Panc1 (cell line): ENCODE measurements at regions of chr1 and their contacts with region 1.

Region 1: GRCh38 chr1:205172729-205173366 is 38.7 kb downstream of the DSTYK start:
- DNase-seq: peak; percentile 64
- ATAC-seq: peak; percentile 47; the same call in 1 of the 2 replicates
- H3K4me3 ChIP-seq: no peak overlapping the region
- H3K27ac ChIP-seq: no peak overlapping the region
- H3K4me1 ChIP-seq: peaks cover 10% of the 10 kb centered on the region
- H3K27me3 ChIP-seq: no peaks in the 10 kb centered on the region
- CTCF ChIP-seq: no peak

Region 2: DNA sequence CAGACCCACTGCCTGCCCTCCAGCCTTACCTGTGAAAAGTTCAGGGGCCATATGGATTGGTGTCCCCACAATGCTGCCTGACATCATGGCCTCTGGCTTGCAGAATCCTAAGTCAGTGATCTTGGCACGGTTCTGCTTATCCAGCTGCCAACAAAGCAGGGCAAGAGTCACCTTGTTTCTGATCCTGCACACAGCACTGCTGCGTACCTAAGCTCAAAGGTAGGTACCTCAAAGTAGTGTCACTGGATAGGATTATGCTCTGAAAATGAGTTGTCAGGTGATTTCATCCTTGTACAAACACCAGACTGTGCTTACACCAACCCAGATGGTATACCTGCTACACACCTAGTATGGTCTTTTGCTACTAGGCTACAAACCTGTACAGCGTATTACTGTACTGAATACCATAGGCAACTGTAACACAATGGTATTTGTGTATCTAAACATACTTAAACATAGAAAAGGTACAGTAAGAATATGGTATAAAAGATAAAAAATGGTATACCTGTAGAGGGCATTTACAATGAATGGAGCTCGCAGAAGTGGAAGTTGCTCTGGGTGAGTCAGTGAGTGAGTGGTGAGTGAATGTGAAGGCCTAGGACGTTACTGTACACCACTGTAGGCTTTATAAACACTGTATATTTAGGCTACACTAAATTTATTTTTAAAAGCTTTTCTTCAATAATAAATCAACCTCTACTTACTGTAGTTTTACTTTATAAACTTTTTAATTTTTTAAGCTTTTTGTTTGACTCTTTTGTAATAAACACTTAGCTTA is 22.0 kb before region 1 on chr1:
- CTCF ChIA-PET with region 1: no interaction called
- POLR2A ChIA-PET with region 1: no interaction called
- in situ Hi-C with region 1: no loop called
- intact Hi-C with region 1: no loop called
- DNase-seq: no peak
- ATAC-seq: no peak
- H3K4me3 ChIP-seq: no peak overlapping the region
- H3K27ac ChIP-seq: no peak overlapping the region
- H3K4me1 ChIP-seq: no peaks in the 10 kb centered on the region
- H3K27me3 ChIP-seq: no peaks in the 10 kb centered on the region
- CTCF ChIP-seq: no peak

Region 3: GRCh38 chr1:205186191-205186590 is 13.3 kb after region 1 on chr1:
- CTCF ChIA-PET with region 1: interaction called, 4 read pairs
- POLR2A ChIA-PET with region 1: interaction called, 10 read pairs
- in situ Hi-C with region 1: no loop called
- intact Hi-C with region 1: no loop called
- DNase-seq: no peak
- ATAC-seq: no peak
- H3K4me3 ChIP-seq: no peak overlapping the region
- H3K27ac ChIP-seq: no peak overlapping the region
- H3K4me1 ChIP-seq: 0 out of 2 replicates have a peak, but pooled peaks cover 2% of the 10 kb centered on the region
- H3K27me3 ChIP-seq: no peaks in the 10 kb centered on the region
- CTCF ChIP-seq: no peak

Region 4: GRCh38 chr1:205227584-205228006 is 54.7 kb after region 1 on chr1 and contains the start of gene TMCC2:
- CTCF ChIA-PET with region 1: no interaction called
- POLR2A ChIA-PET with region 1: interaction called, 11 read pairs
- in situ Hi-C with region 1: no loop called
- intact Hi-C with region 1: no loop called
- DNase-seq: no peak
- ATAC-seq: peak; percentile 96
- H3K4me3 ChIP-seq: peak within 1 kb of the TSS; percentile 70 to 74
- H3K27ac ChIP-seq: peak within 1 kb of the TSS; percentile 65; the same call in 1 of the 2 replicates
- H3K4me1 ChIP-seq: peaks cover 9% of the 10 kb centered on the region
- H3K27me3 ChIP-seq: no peaks in the 10 kb centered on the region; the same call in 1 of the 2 replicates
- CTCF ChIP-seq: no peak
- total RNA-seq, gene TMCC2: 3.1 TPM

Region 5: DNA sequence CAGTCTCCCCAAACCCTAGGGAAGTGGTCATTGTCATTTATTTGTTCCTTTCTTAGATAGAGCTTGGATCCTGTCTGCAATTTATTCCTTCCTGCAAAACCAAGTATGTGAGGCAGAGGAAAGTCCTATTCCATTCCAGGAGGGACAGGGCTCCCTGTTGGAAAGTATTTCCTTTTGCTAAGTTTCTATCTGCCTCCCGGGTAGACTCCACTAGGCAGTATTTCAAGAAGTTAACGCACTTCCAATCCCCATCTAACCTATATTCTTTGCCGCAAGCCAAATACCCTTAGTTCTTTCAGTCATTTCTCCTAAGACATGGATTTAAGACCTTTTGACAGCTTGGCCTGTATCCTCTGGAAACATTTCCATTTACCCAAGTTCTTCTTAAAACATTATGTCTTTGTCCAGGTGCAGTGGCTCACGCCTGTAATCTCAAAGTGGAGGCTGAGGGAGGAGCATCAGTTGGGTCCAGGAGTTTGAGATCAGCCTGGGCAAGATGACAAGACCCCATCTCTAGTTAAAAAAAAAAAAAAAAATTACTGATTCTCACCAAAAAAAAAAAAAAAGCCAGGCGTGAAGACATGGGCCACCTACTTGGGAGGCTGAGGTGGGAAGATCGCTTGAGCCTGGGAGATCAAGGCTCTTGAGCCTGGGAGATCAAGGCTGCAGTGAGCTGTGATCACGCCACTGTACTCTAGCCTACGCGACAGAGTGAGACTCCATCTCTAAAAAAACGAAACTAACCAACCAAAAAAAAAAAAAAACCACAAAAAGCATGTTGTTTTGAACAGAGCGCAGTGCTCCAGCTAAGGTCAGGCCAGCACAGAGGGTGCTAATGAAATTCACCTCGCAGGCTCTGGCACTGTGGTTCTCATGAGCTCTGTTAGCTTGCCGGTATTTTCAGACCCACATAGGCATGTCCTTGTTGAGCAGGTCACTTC is 112.6 kb after region 1 on chr1:
- CTCF ChIA-PET with region 1: interaction called, 11 read pairs
- POLR2A ChIA-PET with region 1: no interaction called
- in situ Hi-C with region 1: no loop called
- intact Hi-C with region 1: no loop called
- DNase-seq: no peak
- ATAC-seq: no peak
- H3K4me3 ChIP-seq: no peak overlapping the region
- H3K27ac ChIP-seq: peak overlapping the region; percentile 46
- H3K4me1 ChIP-seq: peaks cover 27% of the 10 kb centered on the region
- H3K27me3 ChIP-seq: no peaks in the 10 kb centered on the region
- CTCF ChIP-seq: no peak